ENCODE measurements at regions of chr2 and their contacts with region 1.

Region 1: DNA sequence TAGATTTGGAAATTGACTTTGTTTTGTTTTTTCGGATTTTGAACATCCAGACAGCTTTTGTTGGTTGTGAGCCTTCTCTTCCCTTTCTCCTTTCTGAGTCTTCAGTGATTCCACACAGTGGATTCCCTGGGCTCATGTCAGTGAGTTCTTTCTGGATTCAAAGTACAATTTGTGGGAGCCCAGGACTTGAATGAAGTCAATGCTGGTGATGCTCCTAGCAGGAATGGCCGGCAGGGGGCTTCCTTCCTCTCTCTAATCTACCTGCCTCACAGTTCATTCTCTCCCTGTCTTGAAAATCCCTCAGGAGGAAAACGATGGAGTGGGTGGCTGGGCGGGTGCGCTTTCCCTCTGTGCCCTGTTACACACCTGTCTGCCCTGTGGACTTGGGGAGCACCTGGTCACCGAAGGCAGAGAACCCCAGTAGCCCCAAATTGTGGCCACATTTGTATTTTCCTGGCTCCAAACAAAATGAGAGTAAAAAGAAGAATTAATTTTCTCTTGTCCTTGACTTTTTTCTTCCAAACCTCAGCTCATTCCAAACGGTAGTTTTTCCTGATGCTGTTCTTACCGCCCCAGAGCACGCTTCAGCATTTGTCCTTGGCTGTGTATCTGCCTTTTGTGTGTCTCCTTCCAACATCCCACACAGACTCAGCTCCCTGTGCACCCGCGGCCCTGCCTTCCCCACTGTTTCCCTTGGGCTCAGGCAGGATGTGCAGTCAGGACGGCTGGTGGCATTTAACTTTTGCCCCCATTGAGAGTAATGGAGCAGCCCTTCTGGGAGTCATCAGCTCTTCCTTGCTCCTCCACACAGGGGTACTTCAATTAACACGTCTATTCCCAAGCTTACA is 86.6 kb downstream of the MARCO start:
- DNase-seq: peak; percentile 63 to 65
- H3K4me3 ChIP-seq: no peak overlapping the region
- H3K4me3 Mint-ChIP-seq: no peak overlapping the region
- H3K27ac Mint-ChIP-seq: no peak overlapping the region
- H3K4me1 ChIP-seq: no peaks in the 10 kb centered on the region
- H3K4me1 Mint-ChIP-seq: no peaks in the 10 kb centered on the region
- H3K27me3 ChIP-seq: no peaks in the 10 kb centered on the region; the same call in 1 of the 2 replicates
- H3K27me3 Mint-ChIP-seq: peaks cover 17% of the 10 kb centered on the region
- CTCF ChIP-seq: peak; percentile 71 to 78

Region 2: GRCh38 chr2:119008108-119008507 is 20.4 kb before region 1 on chr2:
- CTCF ChIA-PET with region 1: no interaction called
- POLR2A ChIA-PET with region 1: no interaction called
- intact Hi-C with region 1: no loop called
- DNase-seq: peak in 1 of 2 experiments; percentile 17
- H3K4me3 ChIP-seq: no peak overlapping the region
- H3K4me3 Mint-ChIP-seq: no peak overlapping the region
- H3K27ac Mint-ChIP-seq: no peak overlapping the region
- H3K4me1 ChIP-seq: no peaks in the 10 kb centered on the region; the same call in 1 of the 2 replicates
- H3K4me1 Mint-ChIP-seq: no peaks in the 10 kb centered on the region
- H3K27me3 ChIP-seq: peaks cover 2% of the 10 kb centered on the region
- H3K27me3 Mint-ChIP-seq: peaks cover 10% of the 10 kb centered on the region
- CTCF ChIP-seq: peak in 1 of 2 experiments; percentile 12

Region 3: GRCh38 chr2:119174216-119175037 is 145.9 kb after region 1 on chr2:
- CTCF ChIA-PET with region 1: interaction called, 3 read pairs
- POLR2A ChIA-PET with region 1: no interaction called
- intact Hi-C with region 1: loop called (anchors 1 kb)
- DNase-seq: peak; percentile 70 to 75
- H3K4me3 ChIP-seq: no peak overlapping the region
- H3K4me3 Mint-ChIP-seq: no peak overlapping the region
- H3K27ac Mint-ChIP-seq: no peak overlapping the region
- H3K4me1 ChIP-seq: no peaks in the 10 kb centered on the region
- H3K4me1 Mint-ChIP-seq: no peaks in the 10 kb centered on the region
- H3K27me3 ChIP-seq: no peaks in the 10 kb centered on the region
- H3K27me3 Mint-ChIP-seq: peaks cover 3% of the 10 kb centered on the region
- CTCF ChIP-seq: peak; percentile 83 to 92

Region 4: GRCh38 chr2:119311356-119311755 is 282.8 kb after region 1 on chr2:
- CTCF ChIA-PET with region 1: no interaction called
- POLR2A ChIA-PET with region 1: no interaction called
- intact Hi-C with region 1: loop called (anchors 2 kb)
- DNase-seq: peak in 1 of 2 experiments; percentile 33
- H3K4me3 ChIP-seq: no peak overlapping the region
- H3K4me3 Mint-ChIP-seq: no peak overlapping the region
- H3K27ac Mint-ChIP-seq: no peak overlapping the region
- H3K4me1 ChIP-seq: peaks cover 17% of the 10 kb centered on the region; the same call in 1 of the 2 replicates
- H3K4me1 Mint-ChIP-seq: peaks cover 23% of the 10 kb centered on the region
- H3K27me3 ChIP-seq: no peaks in the 10 kb centered on the region
- H3K27me3 Mint-ChIP-seq: no peaks in the 10 kb centered on the region
- CTCF ChIP-seq: peak in 1 of 2 experiments; percentile 37

Measured in Caco-2 (cell line).